Esophagus squamous epithelium (tissue), 5 donors: ENCODE measurements at regions of chr4 and their contacts with region 1.

Region 1: DNA sequence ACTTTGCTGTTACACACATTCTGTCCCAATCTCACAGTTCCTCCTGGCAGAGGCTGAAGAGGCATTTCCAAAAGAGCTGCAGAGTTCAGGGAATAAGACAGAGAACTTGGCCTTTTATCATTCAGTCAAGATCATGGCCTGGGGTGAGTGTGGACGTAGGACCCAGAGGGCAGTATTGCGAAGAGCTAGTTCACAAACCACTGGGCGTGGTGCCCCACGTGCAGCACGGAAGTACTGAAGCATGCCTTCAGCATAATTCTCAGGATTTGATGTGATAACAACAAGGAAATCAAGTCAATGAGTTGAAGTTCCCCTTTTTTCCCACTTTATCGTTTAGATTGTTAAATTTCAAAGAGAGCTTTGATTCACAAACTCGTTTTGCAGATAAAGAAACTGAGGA is 117.7 kb downstream of the RELL1 start:
- DNase-seq: no peak
- H3K4me3 ChIP-seq: no peak overlapping the region
- H3K27ac ChIP-seq: no peak overlapping the region
- H3K4me1 ChIP-seq: no peaks in the 10 kb centered on the region
- H3K27me3 ChIP-seq: no peaks in the 10 kb centered on the region
- CTCF ChIP-seq: no peak
- POLR2A ChIP-seq: no peak

Region 2: GRCh38 chr4:37138019-37138653 is 430.3 kb before region 1 on chr4:
- intact Hi-C with region 1: no loop called
- DNase-seq: no peak
- H3K4me3 ChIP-seq: no peak overlapping the region
- H3K27ac ChIP-seq: no peak overlapping the region
- H3K4me1 ChIP-seq: no peaks in the 10 kb centered on the region
- H3K27me3 ChIP-seq: no peaks in the 10 kb centered on the region
- CTCF ChIP-seq: no peak
- POLR2A ChIP-seq: no peak

Region 3: DNA sequence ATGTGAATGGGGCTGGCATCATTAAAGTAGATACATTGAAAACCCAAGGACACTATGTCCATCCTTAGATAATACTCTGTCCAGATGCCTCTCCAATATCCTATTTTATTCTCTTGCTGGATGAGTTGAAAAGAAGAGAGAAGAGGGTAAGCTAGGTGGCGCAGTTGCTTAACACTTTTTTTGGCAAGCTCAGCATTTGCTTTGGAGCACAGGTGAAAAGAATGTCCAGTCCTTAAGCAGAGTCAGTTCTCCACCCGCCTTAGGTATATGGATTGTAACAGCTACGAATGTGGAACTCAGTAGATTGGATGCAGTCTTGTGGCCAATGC is 115.6 kb before region 1 on chr4:
- intact Hi-C with region 1: loop called (anchors 5 kb)
- DNase-seq: no peak
- H3K4me3 ChIP-seq: peak overlapping the region in 3 of 4 donors; percentile 48 to 67 (median 50)
- H3K27ac ChIP-seq: no peak overlapping the region
- H3K4me1 ChIP-seq: peaks cover 6 to 17% (median 10%) of the 10 kb centered on the region in 3 donors
- H3K27me3 ChIP-seq: peaks cover 0 to 83% (median 0%) of the 10 kb centered on the region in 4 donors
- CTCF ChIP-seq: peak in 5 of 6 experiments; percentile 44 to 66 (median 48)
- POLR2A ChIP-seq: no peak

Region 4: GRCh38 chr4:37710491-37710890 is 142.0 kb after region 1 on chr4:
- intact Hi-C with region 1: no loop called
- DNase-seq: no peak
- H3K4me3 ChIP-seq: no peak overlapping the region
- H3K27ac ChIP-seq: no peak overlapping the region
- H3K4me1 ChIP-seq: no peaks in the 10 kb centered on the region
- H3K27me3 ChIP-seq: no peaks in the 10 kb centered on the region
- CTCF ChIP-seq: no peak
- POLR2A ChIP-seq: no peak